Endothelial cell of umbilical vein (primary cell): ENCODE measurements at regions of chr2 and their contacts with region 1.

Region 1: GRCh38 chr2:18299423-18300212 is 260.8 kb downstream of the RDH14 start:
- DNase-seq: peak; percentile 94
- H3K4me3 ChIP-seq: peak overlapping the region; percentile 44 to 100 (median 99)
- H3K27ac ChIP-seq: peak overlapping the region; percentile 97
- H3K4me1 ChIP-seq: peaks cover 39% of the 10 kb centered on the region
- H3K27me3 ChIP-seq: no peaks in the 10 kb centered on the region
- CTCF ChIP-seq: no peak
- POLR2A ChIP-seq: peak; percentile 14

Region 2: GRCh38 chr2:17753803-17754663 is 545.6 kb before region 1 on chr2 and contains the starts of genes GEN1 and SMC6:
- CTCF ChIA-PET with region 1: no interaction called
- POLR2A ChIA-PET with region 1: no interaction called
- dilution Hi-C with region 1: no loop called
- intact Hi-C with region 1: loop called (anchors 10 kb)
- DNase-seq: peak; percentile 94
- H3K4me3 ChIP-seq: peak within 1 kb of the TSS; percentile 74 to 96 (median 81)
- H3K27ac ChIP-seq: peak within 1 kb of the TSS; percentile 88
- H3K4me1 ChIP-seq: peaks cover 47% of the 10 kb centered on the region
- H3K27me3 ChIP-seq: no peaks in the 10 kb centered on the region
- CTCF ChIP-seq: no peak
- POLR2A ChIP-seq: peak; percentile 12
- total RNA-seq, gene GEN1: 20.8 and 29.6 TPM in 2 replicates
- total RNA-seq, gene SMC6: 35.4 and 38.3 TPM in 2 replicates

Region 3: DNA sequence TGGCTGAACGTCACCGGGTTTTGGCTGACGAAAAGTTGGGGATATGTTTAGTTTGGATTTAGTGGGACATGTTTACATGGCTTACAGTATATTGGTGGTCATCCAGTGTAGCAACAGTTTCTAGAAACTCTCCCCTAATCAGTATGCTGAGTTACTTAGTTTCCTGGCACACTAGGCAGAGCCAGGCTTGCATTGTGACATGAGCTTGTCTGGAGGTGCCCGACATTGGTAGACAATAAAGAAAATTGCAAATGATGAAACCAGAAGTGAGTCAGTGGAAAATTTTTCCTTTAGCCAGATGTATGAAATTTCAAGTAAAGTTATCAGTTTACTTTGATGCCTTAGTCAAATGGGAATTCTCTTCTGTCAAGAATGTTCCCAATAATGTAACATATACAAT is 15.3 kb before region 1 on chr2:
- CTCF ChIA-PET with region 1: no interaction called
- POLR2A ChIA-PET with region 1: no interaction called
- dilution Hi-C with region 1: no loop called
- intact Hi-C with region 1: no loop called
- DNase-seq: peak; percentile 9
- H3K4me3 ChIP-seq: no peak overlapping the region
- H3K27ac ChIP-seq: no peak overlapping the region
- H3K4me1 ChIP-seq: no peaks in the 10 kb centered on the region
- H3K27me3 ChIP-seq: no peaks in the 10 kb centered on the region
- CTCF ChIP-seq: no peak
- POLR2A ChIP-seq: no peak

Region 4: DNA sequence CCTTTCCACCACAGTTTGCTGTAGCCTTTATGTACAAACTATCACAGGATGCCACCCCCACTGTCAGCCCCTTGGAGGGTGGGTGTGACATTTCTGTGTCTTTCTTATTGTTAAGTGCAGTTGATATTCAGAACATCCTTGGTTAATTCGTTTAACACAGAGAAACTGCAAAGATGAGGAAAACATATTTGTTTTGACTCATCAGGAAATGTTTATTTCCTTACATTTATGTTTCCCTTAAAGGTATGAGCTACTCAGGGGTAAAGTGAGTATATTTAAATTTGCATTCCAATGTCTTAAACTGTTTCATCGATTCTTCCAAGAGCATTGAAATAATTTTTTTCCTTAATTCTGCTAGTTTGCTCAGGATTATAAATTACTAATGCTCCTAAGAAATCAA is 17.4 kb after region 1 on chr2:
- CTCF ChIA-PET with region 1: interaction called, 3 read pairs
- POLR2A ChIA-PET with region 1: no interaction called
- dilution Hi-C with region 1: no loop called
- intact Hi-C with region 1: loop called (anchors 1 kb)
- DNase-seq: peak; percentile 43
- H3K4me3 ChIP-seq: peak overlapping the region in 1 of 3 experiments; percentile 45
- H3K27ac ChIP-seq: no peak overlapping the region
- H3K4me1 ChIP-seq: peaks cover 16% of the 10 kb centered on the region
- H3K27me3 ChIP-seq: no peaks in the 10 kb centered on the region
- CTCF ChIP-seq: no peak
- POLR2A ChIP-seq: no peak

Region 5: DNA sequence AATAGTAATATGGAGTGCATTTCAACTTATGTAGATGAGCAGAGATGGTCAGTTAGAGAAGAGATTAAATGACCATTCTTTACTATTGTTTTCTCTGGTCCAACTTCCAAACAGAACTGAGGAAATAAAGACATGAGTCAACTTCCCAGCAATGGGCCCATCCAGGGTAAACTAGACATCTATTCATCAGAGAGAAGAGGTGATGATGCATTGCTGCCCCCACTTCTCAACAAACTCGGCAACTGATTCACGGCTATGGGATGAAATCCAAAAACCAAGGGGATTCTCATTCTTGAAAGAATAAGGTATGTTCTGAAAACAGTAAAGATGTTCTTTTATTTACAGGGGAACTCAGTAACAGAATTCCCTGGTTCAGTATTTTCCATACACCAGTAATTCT is 70.1 kb after region 1 on chr2:
- CTCF ChIA-PET with region 1: interaction called, 4 read pairs
- POLR2A ChIA-PET with region 1: no interaction called
- dilution Hi-C with region 1: no loop called
- intact Hi-C with region 1: loop called (anchors 1 kb)
- DNase-seq: peak; percentile 80
- H3K4me3 ChIP-seq: no peak overlapping the region
- H3K27ac ChIP-seq: peak overlapping the region; percentile 15
- H3K4me1 ChIP-seq: peaks cover 18% of the 10 kb centered on the region
- H3K27me3 ChIP-seq: no peaks in the 10 kb centered on the region
- CTCF ChIP-seq: no peak
- POLR2A ChIP-seq: peak; percentile 23

Region 6: GRCh38 chr2:18413676-18414396 is 114.2 kb after region 1 on chr2:
- CTCF ChIA-PET with region 1: no interaction called
- POLR2A ChIA-PET with region 1: no interaction called
- dilution Hi-C with region 1: no loop called
- intact Hi-C with region 1: loop called (anchors 1 kb)
- DNase-seq: peak; percentile 85
- H3K4me3 ChIP-seq: peak overlapping the region in 1 of 3 experiments; percentile 29
- H3K27ac ChIP-seq: peak overlapping the region; percentile 86
- H3K4me1 ChIP-seq: peaks cover 24% of the 10 kb centered on the region
- H3K27me3 ChIP-seq: no peaks in the 10 kb centered on the region
- CTCF ChIP-seq: no peak
- POLR2A ChIP-seq: no peak

Region 7: DNA sequence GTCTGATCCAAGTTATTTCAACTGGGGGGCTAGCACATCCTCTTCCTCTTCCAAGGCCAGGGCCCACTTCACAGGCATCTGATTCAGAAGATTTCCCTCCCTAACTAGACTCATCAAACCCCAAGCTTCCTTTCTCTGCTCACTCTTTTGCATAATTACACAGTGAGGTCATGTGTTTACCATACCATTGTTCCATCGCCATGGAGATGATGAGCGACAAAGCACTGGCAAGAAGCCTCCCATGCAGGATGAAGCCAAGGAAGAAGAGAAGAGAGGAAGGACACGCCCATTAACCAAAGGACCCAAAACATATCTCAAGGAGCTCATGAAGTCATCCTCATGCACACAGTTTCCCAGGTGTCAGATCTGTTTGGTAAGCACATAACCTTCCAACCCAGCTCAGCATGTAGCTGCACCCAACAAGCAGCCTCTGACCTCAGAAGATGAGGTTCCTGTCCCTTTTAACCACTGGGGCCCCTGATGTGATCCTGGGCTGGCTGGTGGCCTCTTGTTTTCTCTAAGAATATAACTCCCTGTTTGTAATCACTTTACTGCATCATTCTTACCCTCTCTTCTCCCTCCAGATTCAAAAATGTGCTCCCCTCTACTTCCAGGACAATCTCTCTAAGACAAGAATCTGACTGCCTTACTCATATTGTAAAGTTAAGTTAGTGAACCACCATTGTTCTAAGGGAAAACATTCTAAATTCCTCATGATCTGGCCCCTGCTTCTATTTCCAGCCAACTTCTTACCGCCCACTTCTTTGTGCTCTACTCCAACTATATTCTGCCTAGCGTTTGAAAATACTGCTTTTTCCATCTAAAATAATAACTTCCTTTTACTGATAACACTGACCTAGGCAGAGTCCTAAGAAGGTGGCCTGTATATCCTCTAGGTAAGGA is 1412.1 kb after region 1 on chr2:
- CTCF ChIA-PET with region 1: no interaction called
- POLR2A ChIA-PET with region 1: no interaction called
- dilution Hi-C with region 1: no loop called
- intact Hi-C with region 1: loop called (anchors 5 kb)
- DNase-seq: peak; percentile 96
- H3K4me3 ChIP-seq: no peak overlapping the region
- H3K27ac ChIP-seq: peak overlapping the region; percentile 72
- H3K4me1 ChIP-seq: peaks cover 35% of the 10 kb centered on the region
- H3K27me3 ChIP-seq: no peaks in the 10 kb centered on the region
- CTCF ChIP-seq: no peak
- POLR2A ChIP-seq: no peak